ENCODE measurements at regions of chr6 and their contacts with region 1.

Region 1: DNA sequence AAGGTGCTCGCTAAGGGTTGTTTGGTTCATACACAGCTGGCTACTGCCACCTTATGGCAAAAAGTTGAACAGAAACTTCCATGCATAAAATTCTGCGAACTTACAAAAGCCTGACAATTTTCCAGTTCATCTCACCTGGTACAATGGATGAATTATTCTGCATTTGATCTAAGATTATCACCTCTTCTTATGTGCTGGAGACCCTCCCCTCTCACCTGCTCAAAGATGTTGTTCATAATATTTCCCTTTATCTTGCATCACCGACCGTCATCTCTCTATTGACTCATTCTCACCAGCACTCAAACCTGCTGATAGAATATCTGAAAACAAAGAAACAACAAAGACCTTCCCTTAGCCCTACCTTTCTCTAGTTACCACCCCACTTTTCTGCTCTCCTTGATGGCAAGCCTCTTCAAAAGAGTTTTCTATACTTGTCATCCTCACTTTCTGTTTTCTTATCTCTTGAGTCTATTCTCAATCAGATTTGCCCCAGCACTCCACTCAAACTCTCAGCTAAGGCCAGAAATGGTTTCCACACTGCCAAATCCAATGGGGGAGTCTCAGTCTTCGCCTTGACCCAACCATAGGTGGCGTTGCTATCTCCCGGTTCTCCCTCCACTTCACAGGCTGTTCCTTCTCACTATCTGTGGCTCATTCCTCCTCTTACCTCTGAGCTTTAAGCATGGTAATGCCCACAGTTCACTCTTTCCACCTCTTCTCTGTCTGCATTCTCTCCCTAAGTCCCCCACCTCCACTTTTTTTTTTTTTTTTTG is 25.8 kb downstream of the SNRNP48 start:
- DNase-seq: peak in 3 of 5 donors; percentile 61 to 81 (median 78)
- H3K4me3 ChIP-seq: no peak overlapping the region
- H3K27ac ChIP-seq: no peak overlapping the region
- H3K4me1 ChIP-seq: peaks cover 0 to 2% (median 0%) of the 10 kb centered on the region in 3 donors
- H3K27me3 ChIP-seq: no peaks in the 10 kb centered on the region
- CTCF ChIP-seq: peak; percentile 81

Region 2: DNA sequence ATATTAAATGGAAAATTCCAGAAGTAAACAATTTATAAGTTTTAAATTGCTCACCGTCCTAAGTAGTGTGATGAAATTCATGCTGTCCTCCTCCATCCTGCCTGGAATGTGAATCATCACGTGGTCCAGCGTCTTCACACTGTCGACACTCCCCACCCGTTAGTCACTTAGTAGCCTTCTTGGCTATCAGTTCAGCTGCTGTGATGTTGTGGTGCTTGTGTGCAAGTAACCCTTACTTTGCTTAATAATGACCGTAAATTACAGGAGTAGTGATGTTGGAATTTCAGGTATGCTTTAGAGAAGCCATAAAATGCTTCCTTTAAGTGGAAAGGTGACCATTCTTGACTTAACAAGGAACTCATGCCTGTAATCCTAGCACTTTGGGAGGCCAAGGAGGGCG is 201.0 kb before region 1 on chr6:
- intact Hi-C with region 1: loop called (anchors 10 kb)
- DNase-seq: peak in 4 of 5 donors; percentile 32 to 60 (median 44)
- H3K4me3 ChIP-seq: no peak overlapping the region
- H3K27ac ChIP-seq: no peak overlapping the region
- H3K4me1 ChIP-seq: peaks cover 0 to 6% (median 0%) of the 10 kb centered on the region in 3 donors
- H3K27me3 ChIP-seq: no peaks in the 10 kb centered on the region
- CTCF ChIP-seq: no peak

Measured in kidney (tissue), 22 donors.